CD8-positive, alpha-beta T cell (primary cell): ENCODE measurements at regions of chr15 and their contacts with region 1.

Region 1: DNA sequence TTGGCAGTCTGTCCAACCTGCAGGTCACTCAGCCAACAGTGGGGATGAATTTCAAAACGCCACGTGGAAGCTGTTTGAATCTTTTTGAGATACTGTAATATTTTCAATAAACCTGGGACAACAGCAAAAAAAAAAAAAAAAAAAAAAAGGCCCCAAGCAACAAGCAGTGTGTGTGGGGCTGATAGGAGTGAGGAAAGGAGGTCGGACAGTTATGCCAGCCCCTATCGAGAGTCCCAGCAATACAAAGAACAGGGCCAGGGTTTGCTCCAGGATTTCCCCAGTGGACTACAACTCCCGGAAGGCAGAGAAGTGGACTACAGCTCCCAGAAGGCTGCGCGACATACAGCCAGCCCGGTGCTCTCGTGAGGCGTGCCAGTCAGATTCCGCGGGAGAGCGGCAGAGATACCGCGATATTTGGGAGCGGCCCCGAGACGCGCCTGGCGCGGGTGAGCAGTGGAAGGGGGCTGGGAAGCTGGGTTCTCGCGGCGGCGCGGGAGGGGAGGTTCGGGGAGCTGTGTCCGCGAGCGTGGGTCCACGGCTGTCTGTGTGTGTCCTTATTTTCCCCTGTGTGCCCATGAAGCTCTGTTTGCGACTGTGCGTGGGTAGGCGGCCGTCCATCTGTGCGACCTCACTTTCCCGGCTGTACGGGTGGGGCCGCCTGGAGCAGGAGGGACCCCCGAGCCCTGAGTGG is at the start of gene PPCDC:
- DNase-seq: peak; percentile 81 to 96 (median 93)
- ATAC-seq: peak; percentile 100
- H3K4me3 ChIP-seq: peak within 1 kb of the TSS; percentile 82 to 93
- H3K4me3 Mint-ChIP-seq: peak within 1 kb of the TSS; percentile 92
- H3K27ac ChIP-seq: peak within 1 kb of the TSS; percentile 76 to 77
- H3K27ac Mint-ChIP-seq: peak within 1 kb of the TSS; percentile 92
- H3K4me1 ChIP-seq: peaks cover 8% of the 10 kb centered on the region
- H3K4me1 Mint-ChIP-seq: peaks cover 14% of the 10 kb centered on the region
- H3K27me3 ChIP-seq: no peaks in the 10 kb centered on the region
- H3K27me3 Mint-ChIP-seq: no peaks in the 10 kb centered on the region
- CTCF ChIP-seq: no peak
- total RNA-seq, gene PPCDC: 6.0 to 6.5 TPM

Region 2: DNA sequence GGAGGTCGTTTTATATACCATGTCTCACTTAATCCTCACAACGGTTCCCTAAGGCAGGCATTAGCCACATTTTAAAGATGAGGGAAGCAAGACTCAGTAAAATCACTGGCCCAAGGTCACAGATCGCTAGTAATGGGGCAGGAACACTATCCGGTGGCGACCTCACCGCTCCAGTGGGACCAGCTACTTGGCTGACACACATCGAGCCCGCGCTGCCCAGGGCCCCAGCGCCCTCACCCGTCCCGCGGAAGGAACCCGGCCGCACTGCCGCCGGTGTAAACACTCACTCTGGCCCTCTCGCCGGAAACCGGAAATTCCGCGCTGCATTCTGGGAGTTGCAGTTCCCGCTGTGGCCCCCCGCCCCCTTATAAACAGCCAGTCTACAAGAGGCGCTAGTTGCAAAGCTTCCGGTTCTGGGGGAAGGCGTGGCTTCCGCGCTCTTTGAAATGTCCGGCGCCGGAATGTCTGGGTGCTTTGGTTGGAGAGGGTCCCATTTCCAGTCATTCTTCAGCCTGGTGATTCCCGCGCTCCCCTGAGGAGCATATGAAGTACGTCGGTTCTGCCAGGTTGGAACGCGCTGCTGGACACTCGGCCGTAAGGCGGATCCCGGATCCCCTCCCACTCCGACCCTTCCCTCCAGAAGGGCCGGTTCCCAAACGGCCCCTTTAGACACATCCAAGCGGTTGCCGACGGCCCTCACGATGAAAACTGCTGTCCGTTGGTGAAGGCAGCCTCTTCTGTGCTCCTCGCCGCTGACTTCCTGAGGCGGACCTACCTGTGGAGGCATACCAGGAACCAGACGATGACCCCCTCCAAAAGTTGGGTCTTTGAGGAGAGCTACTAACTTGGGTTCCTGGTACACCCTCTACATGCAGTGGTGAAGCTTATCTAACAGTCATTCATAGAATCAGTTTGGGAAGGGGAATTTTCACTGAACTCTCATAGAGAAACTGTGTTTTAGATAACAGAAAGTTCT is 562.2 kb before region 1 on chr15 and contains the start of gene UBL7:
- CTCF ChIA-PET with region 1: no interaction called
- POLR2A ChIA-PET with region 1: no interaction called
- intact Hi-C with region 1: loop called in 1 of 2 experiments (anchors 2 kb)
- DNase-seq: peak; percentile 93 to 99 (median 96)
- ATAC-seq: peak; percentile 98
- H3K4me3 ChIP-seq: peak within 1 kb of the TSS; percentile 74 to 85
- H3K4me3 Mint-ChIP-seq: peak within 1 kb of the TSS; percentile 93
- H3K27ac ChIP-seq: peak within 1 kb of the TSS; percentile 53 to 83
- H3K27ac Mint-ChIP-seq: peak within 1 kb of the TSS; percentile 94
- H3K4me1 ChIP-seq: peaks cover 21% of the 10 kb centered on the region
- H3K4me1 Mint-ChIP-seq: peaks cover 50% of the 10 kb centered on the region
- H3K27me3 ChIP-seq: no peaks in the 10 kb centered on the region
- H3K27me3 Mint-ChIP-seq: no peaks in the 10 kb centered on the region
- CTCF ChIP-seq: no peak
- total RNA-seq, gene UBL7: 21.7 to 23.1 TPM

Region 3: DNA sequence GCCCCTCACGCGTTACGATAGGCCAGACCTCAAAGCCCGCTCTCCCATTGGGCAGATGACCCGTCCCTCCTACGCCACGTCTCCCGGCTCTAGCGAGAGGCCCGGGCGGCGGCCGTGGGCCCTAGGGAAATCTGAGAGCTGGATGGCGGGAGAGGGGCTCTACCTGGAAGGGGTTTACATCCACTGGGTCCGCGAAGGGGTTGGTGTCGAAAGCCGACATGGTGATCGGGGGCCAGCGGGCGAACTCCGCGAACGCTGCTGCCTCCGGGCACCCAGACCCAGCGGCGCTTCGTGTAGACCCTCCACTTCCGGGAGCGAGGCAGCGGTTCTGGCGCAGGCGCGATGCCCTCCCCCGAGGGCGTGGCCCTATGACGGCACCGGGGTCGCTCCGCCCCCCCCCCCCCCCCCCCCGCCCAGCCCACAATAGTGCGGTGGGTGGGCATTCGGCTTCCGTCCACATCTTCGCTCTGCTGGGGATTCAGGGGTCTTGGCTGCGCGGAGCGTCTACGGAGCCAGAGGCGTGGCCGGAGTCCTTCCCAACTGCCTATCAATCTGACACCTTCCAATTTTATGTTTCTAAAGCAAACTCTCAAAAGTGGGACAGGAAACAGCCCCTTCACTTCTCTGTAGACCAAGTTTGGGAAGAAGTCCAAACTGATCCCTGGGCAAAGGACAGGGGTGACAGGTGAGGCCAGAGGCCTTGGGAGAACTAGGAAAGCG is 150.1 kb before region 1 on chr15 and contains the start of gene SCAMP2:
- CTCF ChIA-PET with region 1: no interaction called
- POLR2A ChIA-PET with region 1: no interaction called
- intact Hi-C with region 1: loop called in 1 of 2 experiments (anchors 1 kb)
- DNase-seq: peak; percentile 82 to 96 (median 90)
- ATAC-seq: peak; percentile 93
- H3K4me3 ChIP-seq: peak within 1 kb of the TSS; percentile 84 to 96
- H3K4me3 Mint-ChIP-seq: peak within 1 kb of the TSS; percentile 98
- H3K27ac ChIP-seq: peak within 1 kb of the TSS; percentile 87 to 95
- H3K27ac Mint-ChIP-seq: peak within 1 kb of the TSS; percentile 95
- H3K4me1 ChIP-seq: peaks cover 43% of the 10 kb centered on the region
- H3K4me1 Mint-ChIP-seq: peaks cover 45% of the 10 kb centered on the region
- H3K27me3 ChIP-seq: no peaks in the 10 kb centered on the region
- H3K27me3 Mint-ChIP-seq: no peaks in the 10 kb centered on the region
- CTCF ChIP-seq: no peak
- total RNA-seq, gene SCAMP2: 48.7 to 57.2 TPM

Region 4: DNA sequence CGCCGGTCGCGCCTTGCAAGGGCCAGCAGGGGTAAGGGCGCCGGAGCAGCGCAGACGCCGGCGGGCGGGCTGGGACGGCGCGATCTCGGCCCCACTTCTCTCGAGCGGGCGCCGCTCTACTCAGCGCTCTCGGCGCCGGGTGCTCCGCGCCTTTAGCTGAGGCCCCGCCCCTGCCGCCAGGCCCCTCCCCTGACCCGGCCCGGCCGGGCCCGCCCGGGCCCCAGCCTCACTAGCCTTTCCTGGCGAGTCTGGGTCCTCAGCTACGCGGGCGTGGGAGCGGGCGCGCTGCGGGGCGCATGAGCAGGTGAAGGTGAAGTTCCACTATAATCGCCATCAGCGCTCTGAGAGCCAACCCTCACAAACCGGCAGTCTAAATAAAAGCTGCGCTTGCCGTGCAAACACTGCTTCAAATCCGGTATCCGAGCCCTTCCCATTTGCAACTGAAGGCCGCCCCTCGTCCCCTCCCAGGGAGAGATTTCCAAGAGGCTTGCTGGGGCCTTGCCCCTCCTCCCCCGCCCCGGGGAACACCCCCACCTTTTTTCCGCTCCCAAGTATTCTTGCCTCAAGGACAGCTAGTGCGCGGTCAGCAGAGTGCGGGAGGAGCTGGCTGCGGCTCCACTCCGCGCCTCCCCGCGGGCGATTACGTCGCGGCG is 66.6 kb before region 1 on chr15 and contains the start of gene RPP25:
- CTCF ChIA-PET with region 1: no interaction called
- POLR2A ChIA-PET with region 1: no interaction called
- intact Hi-C with region 1: loop called in 1 of 2 experiments (anchors 2 kb)
- DNase-seq: peak; percentile 22 to 78 (median 66)
- ATAC-seq: peak; percentile 89
- H3K4me3 ChIP-seq: peak within 1 kb of the TSS; percentile 56 to 65
- H3K4me3 Mint-ChIP-seq: peak within 1 kb of the TSS; percentile 81
- H3K27ac ChIP-seq: no peak within 1 kb of the TSS
- H3K27ac Mint-ChIP-seq: no peak within 1 kb of the TSS
- H3K4me1 ChIP-seq: peaks cover 26% of the 10 kb centered on the region
- H3K4me1 Mint-ChIP-seq: peaks cover 30% of the 10 kb centered on the region
- H3K27me3 ChIP-seq: peaks cover 17 to 28% of the 10 kb centered on the region in 2 experiments
- H3K27me3 Mint-ChIP-seq: peaks cover 25% of the 10 kb centered on the region
- CTCF ChIP-seq: no peak
- total RNA-seq, gene RPP25: 0.22 to 0.28 TPM

Region 5: GRCh38 chr15:75738647-75739331 is 715.5 kb after region 1 on chr15:
- CTCF ChIA-PET with region 1: no interaction called
- POLR2A ChIA-PET with region 1: no interaction called
- intact Hi-C with region 1: loop called in 1 of 2 experiments (anchors 2 kb)
- DNase-seq: peak; percentile 70 to 92 (median 89)
- ATAC-seq: peak; percentile 91
- H3K4me3 ChIP-seq: peak overlapping the region; percentile 67 to 79
- H3K4me3 Mint-ChIP-seq: peak overlapping the region; percentile 84
- H3K27ac ChIP-seq: peak overlapping the region in 1 of 2 experiments; percentile 51
- H3K27ac Mint-ChIP-seq: peak overlapping the region; percentile 70
- H3K4me1 ChIP-seq: peaks cover 14% of the 10 kb centered on the region
- H3K4me1 Mint-ChIP-seq: peaks cover 14% of the 10 kb centered on the region
- H3K27me3 ChIP-seq: peaks cover 0 to 4% of the 10 kb centered on the region in 2 experiments
- H3K27me3 Mint-ChIP-seq: peaks cover 3% of the 10 kb centered on the region
- CTCF ChIP-seq: no peak